ENCODE measurements at regions of chr13 and their contacts with region 1.

Region 1: GRCh38 chr13:50576156-50576555 is 267.3 kb downstream of the DLEU7 start:
- DNase-seq: no peak

Region 2: GRCh38 chr13:50693727-50694126 is 117.6 kb after region 1 on chr13:
- intact Hi-C with region 1: loop called (anchors 2 kb)
- DNase-seq: no peak

Region 3: DNA sequence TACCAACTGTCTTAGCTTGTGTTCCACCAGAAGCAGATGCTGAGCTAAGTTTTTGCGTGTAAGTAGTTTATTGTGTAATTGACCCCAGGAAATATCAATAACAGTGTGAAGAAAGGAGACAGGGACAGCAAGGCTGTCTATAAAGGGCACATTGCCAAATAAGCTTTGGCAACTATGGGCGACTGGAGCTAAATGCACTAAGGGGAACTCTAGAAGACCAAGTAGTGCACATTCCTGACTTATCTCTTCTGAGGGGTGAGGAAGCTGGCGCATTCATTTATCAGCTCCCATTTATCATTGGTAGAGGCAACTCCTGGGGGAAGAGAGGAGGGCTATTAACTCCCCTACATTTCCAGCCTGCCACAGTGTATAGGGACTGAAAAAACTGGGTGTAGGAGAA is 132.3 kb after region 1 on chr13:
- intact Hi-C with region 1: loop called (anchors 5 kb)
- DNase-seq: no peak

Region 4: DNA sequence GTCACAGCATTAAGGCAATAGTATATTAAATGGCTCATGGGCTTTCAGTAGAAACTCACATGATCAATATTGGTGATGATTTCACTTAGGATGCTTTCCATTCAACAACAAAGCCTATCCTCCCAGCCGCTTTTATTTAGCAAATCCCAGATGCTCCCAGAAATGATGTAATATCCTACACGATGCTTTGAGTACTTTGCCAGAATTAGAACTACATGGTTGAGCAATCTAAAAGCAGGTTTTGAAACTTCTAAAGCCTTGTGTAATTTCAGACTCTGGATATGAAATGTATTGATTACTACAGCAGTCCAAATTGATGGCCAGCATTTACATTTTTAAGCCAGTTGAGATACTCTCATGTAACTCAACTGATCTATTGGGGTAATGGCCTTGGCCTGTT is 253.7 kb after region 1 on chr13:
- intact Hi-C with region 1: no loop called
- DNase-seq: no peak